ENCODE measurements at regions of chr6 and their contacts with region 1.

Region 1: GRCh38 chr6:89352278-89353117 is at the start of gene UBE2J1:
- DNase-seq: peak; percentile 82
- H3K4me3 Mint-ChIP-seq: peak within 1 kb of the TSS; percentile 90
- H3K27ac Mint-ChIP-seq: peak within 1 kb of the TSS; percentile 88
- H3K4me1 Mint-ChIP-seq: peaks cover 68% of the 10 kb centered on the region
- H3K27me3 Mint-ChIP-seq: no peaks in the 10 kb centered on the region
- total RNA-seq, gene UBE2J1: 36.9 to 37.2 TPM

Region 2: GRCh38 chr6:89110284-89110683 is 242.2 kb before region 1 on chr6:
- CTCF ChIA-PET with region 1: no interaction called
- POLR2A ChIA-PET with region 1: no interaction called
- DNase-seq: no peak
- H3K4me3 Mint-ChIP-seq: no peak overlapping the region
- H3K27ac Mint-ChIP-seq: no peak overlapping the region
- H3K4me1 Mint-ChIP-seq: no peaks in the 10 kb centered on the region
- H3K27me3 Mint-ChIP-seq: no peaks in the 10 kb centered on the region

Region 3: GRCh38 chr6:89145787-89146646 is 206.5 kb before region 1 on chr6 and contains the start of gene PM20D2:
- CTCF ChIA-PET with region 1: no interaction called
- POLR2A ChIA-PET with region 1: interaction called, 25 read pairs
- DNase-seq: peak; percentile 57
- H3K4me3 Mint-ChIP-seq: peak within 1 kb of the TSS; percentile 82
- H3K27ac Mint-ChIP-seq: peak within 1 kb of the TSS; percentile 73
- H3K4me1 Mint-ChIP-seq: peaks cover 34% of the 10 kb centered on the region
- H3K27me3 Mint-ChIP-seq: peaks cover 28% of the 10 kb centered on the region
- total RNA-seq, gene PM20D2: 5.0 to 5.5 TPM

Region 4: DNA sequence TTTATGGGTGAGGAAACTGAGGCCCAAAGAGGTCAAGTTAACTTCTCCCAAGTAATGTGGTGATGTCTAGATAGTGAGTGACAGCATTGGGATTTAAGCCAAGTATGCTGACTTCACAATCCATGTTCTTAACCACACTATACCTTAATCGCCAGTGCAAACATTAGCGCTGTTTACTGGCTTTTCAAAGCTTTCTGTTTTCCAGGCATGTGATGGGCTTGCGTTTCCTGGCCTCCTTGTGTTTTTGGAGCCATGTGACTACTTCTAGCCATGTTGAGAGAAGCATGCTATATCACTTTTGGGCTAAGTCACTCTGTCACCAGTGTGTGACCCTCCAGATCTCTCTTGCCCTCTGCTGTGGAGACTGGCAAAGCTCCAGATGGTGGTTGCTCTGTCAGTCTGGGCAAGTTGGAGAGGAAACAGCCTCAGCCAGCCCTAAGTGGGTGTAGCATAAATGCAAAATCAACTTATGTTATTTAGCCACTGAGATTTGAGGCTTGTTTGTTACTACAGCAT is 157.3 kb after region 1 on chr6:
- CTCF ChIA-PET with region 1: no interaction called
- POLR2A ChIA-PET with region 1: no interaction called
- DNase-seq: no peak
- H3K4me3 Mint-ChIP-seq: no peak overlapping the region
- H3K27ac Mint-ChIP-seq: no peak overlapping the region
- H3K4me1 Mint-ChIP-seq: no peaks in the 10 kb centered on the region
- H3K27me3 Mint-ChIP-seq: no peaks in the 10 kb centered on the region

Measured in activated CD4-positive, alpha-beta memory T cell treated with anti-CD3 and anti-CD28 coated beads, Interleukin-2, amount 10 ng/mL, durations not matched to agents 7 days and 5 days (primary cell).